Ovary (tissue), 10 donors: ENCODE measurements at regions of chr6 and their contacts with region 1.

Region 1: GRCh38 chr6:88586371-88587149 is 376.9 kb downstream of the RNGTT start:
- DNase-seq: peak in 2 of 5 donors; percentile 17 to 46
- H3K4me3 ChIP-seq: no peak overlapping the region
- H3K27ac ChIP-seq: no peak overlapping the region
- H3K4me1 ChIP-seq: no peaks in the 10 kb centered on the region
- H3K27me3 ChIP-seq: no peaks in the 10 kb centered on the region
- CTCF ChIP-seq: no peak
- EP300 ChIP-seq: no peak
- POLR2A ChIP-seq: no peak

Region 2: GRCh38 chr6:88339761-88340160 is 246.8 kb before region 1 on chr6:
- intact Hi-C with region 1: loop called in 1 of 4 experiments (anchors 5 kb)
- DNase-seq: no peak
- H3K4me3 ChIP-seq: no peak overlapping the region
- H3K27ac ChIP-seq: no peak overlapping the region
- H3K4me1 ChIP-seq: no peaks in the 10 kb centered on the region
- H3K27me3 ChIP-seq: no peaks in the 10 kb centered on the region
- CTCF ChIP-seq: no peak
- EP300 ChIP-seq: no peak
- POLR2A ChIP-seq: no peak

Region 3: GRCh38 chr6:90249034-90249433 is 1662.5 kb after region 1 on chr6:
- intact Hi-C with region 1: loop called in 1 of 4 experiments (anchors 5 kb)
- DNase-seq: no peak
- H3K4me3 ChIP-seq: no peak overlapping the region
- H3K27ac ChIP-seq: no peak overlapping the region
- H3K4me1 ChIP-seq: peaks cover 3% of the 10 kb centered on the region
- H3K27me3 ChIP-seq: no peaks in the 10 kb centered on the region
- CTCF ChIP-seq: no peak
- EP300 ChIP-seq: no peak
- POLR2A ChIP-seq: no peak